A673 (cell line): ENCODE measurements at regions of chr17 and their contacts with region 1.

Region 1: GRCh38 chr17:82418001-82418986 is at the starts of genes HEXD and OGFOD3:
- DNase-seq: peak; percentile 91
- H3K4me3 ChIP-seq: peak within 1 kb of the TSS; percentile 84
- H3K27ac ChIP-seq: peak within 1 kb of the TSS; percentile 92
- H3K4me1 ChIP-seq: peaks cover 8% of the 10 kb centered on the region
- H3K27me3 ChIP-seq: no peaks in the 10 kb centered on the region
- CTCF ChIP-seq: no peak
- total RNA-seq, gene HEXD: 20.1 and 24.0 TPM in 2 replicates
- total RNA-seq, gene OGFOD3: 25.0 and 30.9 TPM in 2 replicates

Region 2: GRCh38 chr17:82236142-82236981 is 181.9 kb before region 1 on chr17:
- CTCF ChIA-PET with region 1: no interaction called
- POLR2A ChIA-PET with region 1: no interaction called
- intact Hi-C with region 1: loop called (anchors 10 kb)
- DNase-seq: peak; percentile 84
- H3K4me3 ChIP-seq: no peak overlapping the region
- H3K27ac ChIP-seq: peak overlapping the region; percentile 35
- H3K4me1 ChIP-seq: peaks cover 39% of the 10 kb centered on the region
- H3K27me3 ChIP-seq: no peaks in the 10 kb centered on the region
- CTCF ChIP-seq: peak; percentile 98

Region 3: DNA sequence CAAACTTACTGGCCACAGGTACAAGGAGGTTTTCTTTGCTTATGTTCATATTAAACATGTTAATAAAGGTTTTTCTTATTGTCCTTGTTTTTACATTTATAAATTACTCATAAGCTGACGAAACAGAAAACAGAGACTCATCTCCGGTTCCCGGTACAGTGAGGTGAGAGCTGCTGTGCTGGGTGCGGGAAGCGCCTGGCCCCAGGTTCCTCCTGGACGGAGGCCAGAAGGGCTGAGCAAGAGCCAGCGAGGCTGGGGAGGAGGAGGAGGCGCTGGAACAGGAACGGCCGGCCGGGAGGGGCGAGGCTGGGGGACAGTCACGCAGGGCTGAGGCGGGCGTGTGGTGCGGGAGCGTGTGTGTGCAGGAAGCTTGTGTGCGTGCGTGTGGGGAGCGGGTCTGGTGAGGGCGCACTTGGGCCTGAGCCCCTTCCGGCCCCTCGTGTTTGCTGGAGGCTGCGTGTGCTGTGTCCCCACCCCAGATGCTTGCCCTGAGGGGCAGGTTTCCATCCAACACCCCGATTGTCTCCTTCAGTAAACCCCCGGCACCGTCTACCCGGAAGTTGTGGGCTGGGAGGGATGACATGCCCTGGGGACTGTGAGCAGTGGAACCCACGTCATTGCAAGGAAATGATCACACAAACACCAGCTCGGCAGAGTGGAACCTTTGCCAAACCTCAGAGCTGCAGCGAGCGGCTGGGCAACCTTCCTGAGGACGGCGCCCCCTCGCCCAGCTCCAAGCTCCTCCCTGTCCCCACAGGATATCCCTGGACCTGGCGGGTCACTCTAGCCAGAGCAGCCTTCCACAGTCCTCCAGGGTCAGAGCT is 120.4 kb before region 1 on chr17:
- CTCF ChIA-PET with region 1: no interaction called
- POLR2A ChIA-PET with region 1: no interaction called
- intact Hi-C with region 1: loop called (anchors 5 kb)
- DNase-seq: peak; percentile 73
- H3K4me3 ChIP-seq: peak overlapping the region; percentile 35
- H3K27ac ChIP-seq: peak overlapping the region; percentile 65
- H3K4me1 ChIP-seq: peaks cover 19% of the 10 kb centered on the region
- H3K27me3 ChIP-seq: no peaks in the 10 kb centered on the region
- CTCF ChIP-seq: no peak

Region 4: DNA sequence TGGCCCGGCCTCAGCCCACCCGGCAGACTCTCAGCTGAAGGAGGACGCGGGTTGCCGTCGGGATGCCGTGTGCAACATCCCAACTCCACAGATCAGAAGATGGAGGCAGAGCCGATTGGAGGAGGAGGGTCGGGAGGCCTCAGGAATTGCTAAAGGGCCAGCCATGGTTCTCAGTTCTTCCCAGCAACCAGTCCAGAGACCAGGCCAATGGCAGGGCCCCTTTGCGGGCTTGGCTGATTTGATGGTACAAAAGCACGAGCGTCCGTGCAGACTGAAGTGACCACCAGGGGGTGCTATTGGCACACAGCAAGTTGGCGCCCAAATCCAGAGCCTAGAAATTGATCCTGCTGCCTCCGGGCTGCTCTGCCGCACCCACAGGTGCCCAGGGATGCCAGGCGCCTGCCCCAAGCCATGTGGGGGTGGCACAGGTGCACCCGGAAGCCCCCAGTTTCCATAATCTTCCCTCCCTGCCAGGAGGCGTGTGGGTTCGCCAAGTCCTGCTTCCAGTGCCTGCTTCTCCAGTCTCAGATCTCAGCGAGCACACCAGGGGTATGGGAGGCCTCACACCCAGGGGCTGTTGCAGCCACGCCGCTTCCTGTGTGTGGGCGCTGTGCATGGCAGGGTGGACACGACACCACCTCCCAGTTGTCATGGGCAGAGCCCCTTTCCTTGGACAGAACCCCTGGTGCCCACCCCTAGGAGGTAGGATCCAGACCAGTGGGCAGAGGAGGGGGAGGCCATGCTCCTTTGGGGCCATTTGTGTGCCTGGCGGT is 66.4 kb before region 1 on chr17:
- CTCF ChIA-PET with region 1: no interaction called
- POLR2A ChIA-PET with region 1: interaction called, 3 read pairs
- intact Hi-C with region 1: loop called (anchors 1 kb)
- DNase-seq: peak; percentile 89
- H3K4me3 ChIP-seq: no peak overlapping the region
- H3K27ac ChIP-seq: no peak overlapping the region
- H3K4me1 ChIP-seq: peaks cover 17% of the 10 kb centered on the region
- H3K27me3 ChIP-seq: no peaks in the 10 kb centered on the region
- CTCF ChIP-seq: peak; percentile 92

Region 5: DNA sequence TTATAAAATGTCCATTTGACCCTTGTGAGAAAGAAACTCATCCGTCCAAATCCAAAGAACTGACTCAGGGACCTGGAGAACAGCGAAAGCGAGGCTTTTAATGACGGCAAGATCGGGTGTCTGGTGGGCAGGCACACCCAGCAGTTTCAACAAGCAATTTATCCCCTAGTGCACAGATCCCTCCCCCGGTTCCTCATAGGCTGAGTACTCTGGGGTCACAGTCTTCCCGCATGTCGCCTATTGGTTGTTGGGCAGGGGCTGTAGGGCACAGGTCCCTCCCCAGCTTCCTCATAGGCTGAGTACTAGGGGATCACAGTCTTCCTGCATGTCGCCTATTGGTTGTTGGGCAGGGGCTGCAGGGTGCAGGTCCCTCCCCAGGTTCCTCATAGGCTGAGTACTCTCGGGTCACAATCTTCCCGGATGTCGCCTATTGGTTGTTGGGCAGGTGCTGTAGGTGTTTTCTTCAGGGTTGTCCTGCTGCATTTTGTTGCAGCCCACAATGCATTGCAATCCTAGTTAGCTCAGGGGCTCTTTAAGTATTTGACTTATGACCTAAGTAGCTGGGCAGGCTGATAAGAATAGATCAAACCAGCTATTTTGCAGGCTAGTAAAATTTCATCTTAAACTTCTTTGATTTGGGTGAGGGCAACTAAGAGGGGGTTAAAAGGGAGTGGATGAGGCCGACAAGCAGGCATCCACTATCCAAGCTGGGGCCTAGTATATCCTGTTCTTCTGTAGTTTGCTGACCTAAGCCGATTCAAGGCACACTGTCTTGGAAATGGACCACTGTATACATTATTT is 50.4 kb before region 1 on chr17:
- CTCF ChIA-PET with region 1: no interaction called
- POLR2A ChIA-PET with region 1: no interaction called
- intact Hi-C with region 1: loop called (anchors 5 kb)
- DNase-seq: peak; percentile 88
- H3K4me3 ChIP-seq: peak overlapping the region; percentile 17
- H3K27ac ChIP-seq: no peak overlapping the region
- H3K4me1 ChIP-seq: peaks cover 16% of the 10 kb centered on the region
- H3K27me3 ChIP-seq: peaks cover 4% of the 10 kb centered on the region
- CTCF ChIP-seq: no peak

Region 6: DNA sequence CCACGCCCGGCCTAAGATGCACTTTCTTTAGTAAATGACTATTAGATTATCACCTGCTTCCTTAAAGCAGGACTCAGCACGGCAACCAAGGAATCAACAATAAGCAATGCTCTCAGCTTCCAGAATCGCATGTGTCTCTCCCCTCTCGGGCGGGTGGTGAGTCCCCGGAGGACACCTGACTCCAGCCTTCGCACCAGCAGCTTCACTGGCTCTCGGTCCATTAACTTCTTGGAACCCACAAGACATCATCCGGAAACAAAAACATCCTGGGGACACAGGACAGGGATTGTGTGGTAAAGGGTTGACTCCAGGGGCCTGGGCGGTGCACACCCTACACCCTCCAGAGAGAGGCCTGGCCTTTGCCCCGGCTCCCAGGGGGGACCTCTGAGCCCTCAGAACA is 24.0 kb before region 1 on chr17:
- CTCF ChIA-PET with region 1: no interaction called
- POLR2A ChIA-PET with region 1: interaction called, 19 read pairs
- intact Hi-C with region 1: no loop called
- DNase-seq: no peak
- H3K4me3 ChIP-seq: no peak overlapping the region
- H3K27ac ChIP-seq: no peak overlapping the region
- H3K4me1 ChIP-seq: peaks cover 16% of the 10 kb centered on the region
- H3K27me3 ChIP-seq: no peaks in the 10 kb centered on the region
- CTCF ChIP-seq: no peak